Activated naive CD4-positive, alpha-beta T cell treated with anti-CD3 and anti-CD28 coated beads for 36 hours (primary cell): ENCODE measurements at regions of chr9 and their contacts with region 1.

Region 1: DNA sequence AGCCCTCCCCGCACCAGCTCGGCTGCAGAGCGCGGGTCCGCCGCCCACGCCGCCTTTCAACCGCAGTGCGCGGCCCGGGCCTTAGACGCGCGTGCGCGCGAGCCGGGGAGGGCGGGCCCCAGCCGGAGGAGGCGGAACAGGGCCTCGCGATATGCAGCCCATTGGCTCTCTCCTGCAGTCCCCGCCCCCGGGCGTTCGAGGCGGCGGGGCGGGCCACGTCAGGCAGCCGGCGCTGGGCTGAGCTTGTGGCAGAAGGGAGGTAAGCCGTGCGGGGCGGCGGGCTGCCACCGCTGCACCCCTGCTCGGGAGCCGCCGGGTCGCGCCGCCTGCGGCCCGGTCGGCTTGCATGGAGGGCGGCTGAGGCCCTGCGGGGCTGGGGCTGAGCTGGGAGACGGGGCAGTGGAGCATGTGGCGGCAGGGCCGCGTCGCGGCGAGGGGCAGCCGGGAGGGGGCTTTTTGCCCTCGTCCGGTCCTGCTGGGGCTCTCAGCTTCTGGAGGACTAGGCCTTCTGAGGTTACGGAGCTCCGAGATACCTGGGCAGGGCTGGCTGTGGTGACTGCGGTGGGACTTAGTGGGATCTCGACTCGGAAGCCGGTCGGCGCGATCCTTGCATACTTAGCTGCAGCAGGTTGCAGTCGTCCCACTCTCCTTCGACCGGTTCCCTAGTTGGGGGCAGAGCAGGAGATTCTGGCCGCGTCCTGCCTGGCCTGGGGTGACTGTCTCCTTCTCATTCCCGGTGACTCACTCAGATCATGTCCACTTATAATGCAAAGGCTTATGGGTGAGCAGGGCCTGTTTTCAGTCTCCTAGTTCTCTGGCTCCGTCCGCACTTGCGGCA is at the start of gene FOCAD:
- DNase-seq: peak; percentile 95
- H3K4me3 Mint-ChIP-seq: peak within 1 kb of the TSS; percentile 88
- H3K27ac Mint-ChIP-seq: peak within 1 kb of the TSS; percentile 76
- H3K4me1 Mint-ChIP-seq: peaks cover 17% of the 10 kb centered on the region
- H3K27me3 Mint-ChIP-seq: no peaks in the 10 kb centered on the region
- total RNA-seq, gene FOCAD: 31.7 to 32.2 TPM

Region 2: DNA sequence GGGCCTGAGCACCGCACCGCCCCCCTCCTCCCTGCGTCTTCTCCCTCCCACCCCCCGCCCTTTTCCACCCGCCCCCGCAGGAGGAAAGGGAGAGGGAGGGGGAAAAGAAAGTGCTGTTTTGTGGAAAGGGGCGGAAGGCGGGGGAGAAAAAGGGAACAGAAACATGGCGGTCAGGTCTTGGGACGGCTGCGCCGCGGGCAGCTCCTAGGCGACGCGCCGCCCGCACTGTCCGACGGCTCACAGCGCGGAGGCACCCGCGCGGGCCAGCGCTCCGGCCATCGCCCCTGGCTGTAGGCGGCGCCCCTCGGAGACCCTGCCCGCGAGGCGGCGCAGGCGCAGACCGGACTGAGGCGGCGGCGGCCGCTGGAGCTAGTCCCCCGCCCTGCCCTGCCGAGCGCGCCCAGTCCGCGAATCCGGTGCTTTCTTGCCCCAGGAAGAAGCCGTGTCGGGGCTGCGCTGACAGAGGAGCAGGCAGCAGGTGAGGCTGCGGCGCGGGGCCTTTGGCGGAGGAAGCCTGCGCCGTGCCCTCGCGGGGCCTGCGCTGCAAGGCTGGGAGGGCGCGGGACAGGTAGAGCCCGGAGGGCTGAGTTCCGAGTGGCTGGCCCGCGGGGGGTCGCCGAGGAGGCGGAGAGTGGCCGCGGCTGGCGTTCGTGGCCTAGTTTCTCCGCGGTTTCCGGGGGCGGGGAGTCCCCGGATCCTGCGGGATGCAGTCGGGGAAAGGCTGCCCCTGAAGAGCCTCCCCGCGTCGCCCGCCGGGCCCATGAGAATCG is 1453.7 kb before region 1 on chr9 and contains the start of gene DENND4C:
- CTCF ChIA-PET with region 1: no interaction called
- intact Hi-C with region 1: loop called (anchors 5 kb)
- DNase-seq: peak; percentile 78
- H3K4me3 Mint-ChIP-seq: peak within 1 kb of the TSS; percentile 67
- H3K27ac Mint-ChIP-seq: no peak within 1 kb of the TSS
- H3K4me1 Mint-ChIP-seq: peaks cover 15% of the 10 kb centered on the region
- H3K27me3 Mint-ChIP-seq: no peaks in the 10 kb centered on the region
- total RNA-seq, gene DENND4C: 8.7 to 9.0 TPM

Region 3: DNA sequence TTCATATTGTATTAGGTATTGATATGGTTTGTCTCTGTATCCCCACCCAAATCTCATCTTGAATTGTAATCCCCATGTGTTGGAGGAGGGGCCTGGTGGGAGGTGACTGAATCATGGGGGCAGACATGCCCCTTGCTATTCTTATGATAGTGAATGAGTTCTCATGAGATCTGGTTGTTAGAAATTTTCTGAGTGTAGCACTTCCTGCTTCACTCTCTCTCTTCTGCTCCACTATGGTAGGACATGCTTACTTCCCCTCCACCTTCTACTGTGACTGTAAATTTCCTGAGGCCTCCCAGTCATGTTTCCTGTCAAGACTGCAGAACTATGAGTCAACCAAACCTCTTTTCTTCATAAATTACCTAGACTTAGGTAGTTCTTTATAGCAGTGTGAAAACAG is 708.0 kb before region 1 on chr9:
- CTCF ChIA-PET with region 1: no interaction called
- intact Hi-C with region 1: loop called (anchors 1 kb)
- DNase-seq: peak; percentile 69
- H3K4me3 Mint-ChIP-seq: no peak overlapping the region
- H3K27ac Mint-ChIP-seq: peak overlapping the region; percentile 83
- H3K4me1 Mint-ChIP-seq: peaks cover 28% of the 10 kb centered on the region
- H3K27me3 Mint-ChIP-seq: no peaks in the 10 kb centered on the region

Region 4: DNA sequence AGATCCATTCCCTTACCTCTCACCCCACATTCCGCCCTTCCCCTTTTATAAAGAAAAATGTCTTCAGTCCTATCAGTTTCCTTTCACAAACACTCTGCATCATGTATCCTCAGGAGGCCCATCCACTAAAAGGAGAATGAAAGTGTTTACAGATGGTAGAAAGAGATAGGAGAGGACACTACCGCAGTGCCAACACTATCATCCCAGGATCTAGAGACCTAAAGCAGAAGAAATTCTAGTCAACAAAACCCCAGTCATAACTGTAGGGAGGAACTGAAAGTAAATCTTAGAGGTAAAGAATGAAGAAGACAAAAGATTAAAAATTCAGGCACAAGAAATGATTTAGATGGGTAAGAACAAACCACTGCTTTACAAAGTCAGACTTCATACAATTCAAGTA is 176.0 kb before region 1 on chr9:
- CTCF ChIA-PET with region 1: no interaction called
- intact Hi-C with region 1: loop called (anchors 2 kb)
- DNase-seq: no peak
- H3K4me3 Mint-ChIP-seq: peak overlapping the region; percentile 40
- H3K27ac Mint-ChIP-seq: peak overlapping the region; percentile 13
- H3K4me1 Mint-ChIP-seq: peaks cover 80% of the 10 kb centered on the region
- H3K27me3 Mint-ChIP-seq: no peaks in the 10 kb centered on the region

Region 5: DNA sequence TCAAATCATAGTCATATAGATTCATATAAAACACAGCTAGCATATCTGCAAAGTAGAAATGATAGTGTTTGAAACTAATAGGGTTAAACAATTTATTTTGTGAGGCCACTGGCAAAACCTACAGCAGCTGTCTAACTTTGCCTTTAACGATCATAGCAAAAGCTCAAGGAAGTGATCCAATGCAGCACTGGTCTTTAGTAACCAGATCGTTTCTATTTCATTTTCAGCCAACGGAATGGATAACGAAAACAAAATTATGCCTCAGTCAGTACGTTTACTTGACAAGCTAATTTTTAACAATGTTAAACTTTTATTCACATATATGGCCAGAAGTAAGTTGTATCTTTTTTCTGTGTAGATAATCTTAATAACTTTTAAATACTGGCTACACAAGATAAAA is 79.7 kb before region 1 on chr9:
- CTCF ChIA-PET with region 1: no interaction called
- intact Hi-C with region 1: no loop called
- DNase-seq: no peak
- H3K4me3 Mint-ChIP-seq: peak overlapping the region; percentile 53
- H3K27ac Mint-ChIP-seq: no peak overlapping the region
- H3K4me1 Mint-ChIP-seq: peaks cover 72% of the 10 kb centered on the region
- H3K27me3 Mint-ChIP-seq: no peaks in the 10 kb centered on the region

Region 6: GRCh38 chr9:20658677-20659473 is 25.4 kb before region 1 on chr9:
- CTCF ChIA-PET with region 1: no interaction called
- intact Hi-C with region 1: loop called (anchors 1 kb)
- DNase-seq: no peak
- H3K4me3 Mint-ChIP-seq: no peak overlapping the region
- H3K27ac Mint-ChIP-seq: peak overlapping the region; percentile 81
- H3K4me1 Mint-ChIP-seq: peaks cover 4% of the 10 kb centered on the region
- H3K27me3 Mint-ChIP-seq: no peaks in the 10 kb centered on the region

Region 7: DNA sequence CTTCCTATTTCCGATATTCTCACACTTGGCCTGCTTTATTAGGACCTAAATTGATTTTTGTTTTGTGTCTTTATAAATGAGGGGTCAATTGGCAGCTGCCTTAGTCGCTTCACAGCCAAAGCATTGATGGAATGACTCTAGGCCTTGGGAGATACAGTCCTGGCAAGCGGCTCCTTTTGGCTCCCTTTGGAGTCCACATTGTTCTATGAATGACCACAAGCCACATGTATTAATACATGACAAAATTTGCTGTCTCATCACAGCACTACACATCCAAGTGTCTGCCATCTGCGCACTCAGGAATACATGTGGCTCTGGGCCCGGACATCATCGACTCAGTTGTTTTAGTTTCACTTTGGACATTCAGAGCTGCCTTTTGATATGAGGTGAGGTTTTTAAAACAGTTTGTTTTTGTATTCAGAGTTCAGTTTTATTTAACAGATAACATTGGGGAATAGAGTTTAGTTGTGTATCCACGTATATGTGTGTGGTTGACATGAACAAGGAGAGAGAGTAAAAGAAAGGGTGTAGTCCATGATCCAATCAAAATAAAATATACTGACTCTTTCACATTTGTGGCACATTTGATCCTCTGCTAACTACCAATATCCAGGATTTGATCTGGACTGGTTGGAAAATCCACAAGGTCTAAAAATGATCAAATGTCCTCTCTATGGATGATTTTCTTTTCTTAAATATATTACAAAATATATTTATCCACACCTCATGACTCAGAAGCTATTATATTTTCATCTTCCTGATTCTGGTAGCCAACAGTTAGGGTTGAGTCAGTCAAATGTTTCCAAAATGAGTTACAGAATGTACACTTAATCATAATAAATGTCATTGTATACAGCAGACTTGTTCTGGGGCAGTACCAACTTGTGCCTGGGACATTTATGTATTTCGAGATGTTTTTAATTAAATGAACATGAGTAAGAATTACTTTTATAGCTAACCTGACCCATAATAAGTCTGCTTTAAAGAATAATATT is 1004.2 kb after region 1 on chr9:
- CTCF ChIA-PET with region 1: no interaction called
- intact Hi-C with region 1: loop called (anchors 10 kb)
- DNase-seq: no peak
- H3K4me3 Mint-ChIP-seq: no peak overlapping the region
- H3K27ac Mint-ChIP-seq: peak overlapping the region; percentile 17
- H3K4me1 Mint-ChIP-seq: peaks cover 64% of the 10 kb centered on the region
- H3K27me3 Mint-ChIP-seq: no peaks in the 10 kb centered on the region